ENCODE measurements at regions of chr3 and their contacts with region 1.

Region 1: GRCh38 chr3:17136136-17136721 is 251.5 kb downstream of the PLCL2 start:
- DNase-seq: peak; percentile 90

Region 2: GRCh38 chr3:16286161-16286560 is 850.1 kb before region 1 on chr3:
- intact Hi-C with region 1: loop called in 1 of 2 experiments (anchors 5 kb)
- DNase-seq: no peak

Region 3: DNA sequence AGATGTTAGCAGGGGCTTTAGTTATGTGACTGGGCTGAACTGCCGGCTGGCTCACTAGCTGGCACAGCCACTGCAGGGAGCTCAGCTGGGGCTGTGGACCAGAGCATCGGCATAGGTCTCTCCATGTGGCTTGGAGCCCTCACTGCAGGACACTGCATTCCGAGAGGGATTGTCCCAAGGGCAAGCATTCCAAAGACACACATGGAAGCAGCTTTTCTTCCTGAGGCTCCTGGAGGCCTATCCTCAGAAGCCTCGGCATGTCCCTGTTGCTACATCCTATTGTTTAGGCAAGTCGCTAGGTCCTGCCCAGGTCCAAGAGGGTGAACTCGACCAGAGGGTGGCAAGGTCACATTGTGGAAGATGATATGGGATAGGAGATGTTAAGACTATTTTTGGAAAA is 41.7 kb before region 1 on chr3:
- intact Hi-C with region 1: loop called in 1 of 2 experiments (anchors 1 kb)
- DNase-seq: no peak